ENCODE measurements at regions of chr2 and their contacts with region 1.

Region 1: GRCh38 chr2:118003396-118003824 is 10.5 kb downstream of the CCDC93 start:
- DNase-seq: peak; percentile 67
- ATAC-seq: peak; percentile 96
- H3K4me3 Mint-ChIP-seq: no peak overlapping the region
- H3K27ac Mint-ChIP-seq: no peak overlapping the region
- H3K4me1 Mint-ChIP-seq: peaks cover 11% of the 10 kb centered on the region
- H3K27me3 Mint-ChIP-seq: no peaks in the 10 kb centered on the region
- CTCF ChIP-seq: peak; percentile 86

Region 2: DNA sequence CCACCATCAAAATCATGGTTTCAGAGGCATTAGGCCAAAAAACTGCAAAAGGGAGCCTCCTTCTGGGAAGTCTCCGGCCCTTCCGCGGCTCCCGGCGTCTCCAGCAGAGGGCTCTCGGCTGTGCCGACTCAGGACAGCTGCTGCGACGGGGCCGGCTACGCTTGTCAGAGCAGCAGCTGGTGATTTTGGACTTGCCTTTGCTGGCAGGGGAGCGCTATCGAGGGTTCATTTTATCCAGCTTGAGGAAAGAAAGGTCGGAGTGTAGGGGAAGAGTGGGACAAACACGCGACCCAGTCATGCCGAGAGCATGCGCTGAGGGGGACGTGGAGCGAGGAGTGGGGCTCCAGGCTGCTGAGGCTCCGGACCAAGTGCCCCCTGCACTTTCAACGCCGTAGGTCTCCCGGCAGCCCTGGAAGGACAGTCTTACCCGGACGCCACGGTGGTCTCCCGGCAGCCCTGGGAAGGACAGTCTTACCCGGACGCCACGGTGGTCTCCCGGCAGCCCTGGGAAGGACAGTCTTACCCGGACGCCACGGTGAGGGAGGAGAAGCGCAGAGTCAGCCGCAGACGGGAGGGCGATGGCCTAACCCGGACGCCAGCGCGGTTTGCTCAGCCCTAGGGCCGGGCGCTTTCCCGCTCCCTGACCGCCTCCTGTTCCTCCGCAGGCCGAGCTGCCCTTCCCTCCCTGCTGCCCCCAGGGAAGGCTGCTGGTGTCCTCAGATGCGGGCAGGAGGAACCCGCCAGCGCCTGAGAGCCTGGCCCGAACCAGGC is 167.2 kb before region 1 on chr2:
- CTCF ChIA-PET with region 1: interaction called, 17 read pairs
- POLR2A ChIA-PET with region 1: no interaction called
- intact Hi-C with region 1: no loop called
- DNase-seq: peak; percentile 72
- ATAC-seq: peak; percentile 85
- H3K4me3 Mint-ChIP-seq: peak overlapping the region; percentile 53
- H3K27ac Mint-ChIP-seq: no peak overlapping the region
- H3K4me1 Mint-ChIP-seq: peaks cover 12% of the 10 kb centered on the region
- H3K27me3 Mint-ChIP-seq: no peaks in the 10 kb centered on the region
- CTCF ChIP-seq: peak; percentile 47

Region 3: DNA sequence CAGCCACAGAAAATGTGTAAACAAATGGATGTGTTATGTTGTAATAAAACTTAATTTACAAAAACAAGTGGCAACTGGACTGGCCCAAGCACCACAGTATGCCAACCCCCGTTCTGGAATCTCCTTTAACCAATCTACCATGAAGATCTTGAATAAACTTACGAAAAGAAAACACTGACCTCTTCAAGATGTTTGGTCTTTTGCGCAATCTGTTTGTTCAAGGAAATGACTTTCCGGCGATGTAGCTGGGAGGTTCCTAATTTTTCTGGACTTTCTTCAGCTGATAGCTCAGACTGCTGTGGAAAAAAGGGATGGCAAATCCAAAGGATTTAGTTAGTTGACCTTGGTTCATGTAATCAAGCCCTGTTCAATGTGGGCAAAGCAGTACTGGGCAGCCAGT is 45.2 kb before region 1 on chr2:
- CTCF ChIA-PET with region 1: interaction called, 22 read pairs
- POLR2A ChIA-PET with region 1: no interaction called
- intact Hi-C with region 1: no loop called
- DNase-seq: no peak
- ATAC-seq: no peak
- H3K4me3 Mint-ChIP-seq: no peak overlapping the region
- H3K27ac Mint-ChIP-seq: no peak overlapping the region
- H3K4me1 Mint-ChIP-seq: no peaks in the 10 kb centered on the region
- H3K27me3 Mint-ChIP-seq: no peaks in the 10 kb centered on the region
- CTCF ChIP-seq: no peak

Region 4: GRCh38 chr2:117979911-117980701 is 23.3 kb before region 1 on chr2:
- CTCF ChIA-PET with region 1: interaction called, 12 read pairs
- POLR2A ChIA-PET with region 1: no interaction called
- intact Hi-C with region 1: no loop called
- DNase-seq: no peak
- ATAC-seq: no peak
- H3K4me3 Mint-ChIP-seq: no peak overlapping the region
- H3K27ac Mint-ChIP-seq: no peak overlapping the region
- H3K4me1 Mint-ChIP-seq: no peaks in the 10 kb centered on the region
- H3K27me3 Mint-ChIP-seq: no peaks in the 10 kb centered on the region
- CTCF ChIP-seq: no peak

Region 5: GRCh38 chr2:118013724-118014491 is 10.5 kb after region 1 on chr2 and contains the start of gene CCDC93:
- CTCF ChIA-PET with region 1: interaction called, 34 read pairs
- POLR2A ChIA-PET with region 1: interaction called, 3 read pairs
- intact Hi-C with region 1: no loop called
- DNase-seq: peak; percentile 84
- ATAC-seq: peak; percentile 92
- H3K4me3 Mint-ChIP-seq: peak within 1 kb of the TSS; percentile 97
- H3K27ac Mint-ChIP-seq: peak within 1 kb of the TSS; percentile 90
- H3K4me1 Mint-ChIP-seq: peaks cover 42% of the 10 kb centered on the region
- H3K27me3 Mint-ChIP-seq: no peaks in the 10 kb centered on the region
- CTCF ChIP-seq: no peak
- total RNA-seq, gene CCDC93: 24.5 to 25.4 TPM

Region 6: GRCh38 chr2:118032169-118033013 is 29.0 kb after region 1 on chr2:
- CTCF ChIA-PET with region 1: interaction called, 12 read pairs
- POLR2A ChIA-PET with region 1: no interaction called
- intact Hi-C with region 1: no loop called
- DNase-seq: peak; percentile 70
- ATAC-seq: peak; percentile 88
- H3K4me3 Mint-ChIP-seq: no peak overlapping the region
- H3K27ac Mint-ChIP-seq: no peak overlapping the region
- H3K4me1 Mint-ChIP-seq: no peaks in the 10 kb centered on the region
- H3K27me3 Mint-ChIP-seq: peaks cover 27% of the 10 kb centered on the region
- CTCF ChIP-seq: peak; percentile 74

Region 7: GRCh38 chr2:118054213-118055008 is 51.0 kb after region 1 on chr2:
- CTCF ChIA-PET with region 1: no interaction called
- POLR2A ChIA-PET with region 1: no interaction called
- intact Hi-C with region 1: no loop called
- DNase-seq: no peak
- ATAC-seq: no peak
- H3K4me3 Mint-ChIP-seq: no peak overlapping the region
- H3K27ac Mint-ChIP-seq: no peak overlapping the region
- H3K4me1 Mint-ChIP-seq: no peaks in the 10 kb centered on the region
- H3K27me3 Mint-ChIP-seq: peaks cover 17% of the 10 kb centered on the region
- CTCF ChIP-seq: no peak

Region 8: GRCh38 chr2:118403658-118404451 is 400.4 kb after region 1 on chr2:
- CTCF ChIA-PET with region 1: no interaction called
- POLR2A ChIA-PET with region 1: no interaction called
- intact Hi-C with region 1: no loop called
- DNase-seq: peak; percentile 11
- ATAC-seq: peak; percentile 88
- H3K4me3 Mint-ChIP-seq: no peak overlapping the region
- H3K27ac Mint-ChIP-seq: no peak overlapping the region
- H3K4me1 Mint-ChIP-seq: peaks cover 11% of the 10 kb centered on the region
- H3K27me3 Mint-ChIP-seq: peaks cover 17% of the 10 kb centered on the region
- CTCF ChIP-seq: no peak

Measured in activated CD8-positive, alpha-beta T cell treated with anti-CD3 and anti-CD28 coated beads for 36 hours (primary cell).